ENCODE measurements at regions of chr2 and their contacts with region 1.

Region 1: DNA sequence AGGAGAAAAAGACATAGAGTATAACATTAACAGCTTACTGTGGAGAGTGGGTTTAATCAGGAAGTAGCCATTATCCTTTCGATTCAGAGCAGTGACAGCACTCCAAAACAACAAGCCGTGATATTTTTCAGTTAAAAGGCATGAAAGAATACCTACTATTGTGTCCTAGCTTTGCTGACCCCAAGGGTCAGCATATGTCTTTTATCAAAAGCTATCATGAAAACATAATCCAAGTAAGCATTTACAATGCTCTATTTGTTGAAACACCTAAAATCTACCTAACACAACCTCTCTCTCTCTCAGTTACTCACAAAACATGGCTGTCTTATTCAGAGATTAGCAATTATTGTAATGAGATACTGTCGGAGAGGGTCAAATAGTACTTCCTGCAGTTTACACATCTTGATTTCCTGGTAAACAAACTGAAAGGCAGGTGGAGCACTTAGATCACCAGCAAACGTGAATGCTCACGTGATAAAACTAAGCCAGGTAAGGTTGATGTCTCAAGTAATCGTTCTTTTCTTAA is 100.0 kb downstream of the BAZ2B start:
- DNase-seq: peak; percentile 76
- H3K4me3 Mint-ChIP-seq: peak overlapping the region; percentile 76
- H3K27ac Mint-ChIP-seq: peak overlapping the region; percentile 92
- H3K4me1 Mint-ChIP-seq: peaks cover 20% of the 10 kb centered on the region
- H3K27me3 Mint-ChIP-seq: no peaks in the 10 kb centered on the region
- CTCF ChIP-seq: no peak

Region 2: GRCh38 chr2:159044804-159045286 is 471.5 kb before region 1 on chr2:
- CTCF ChIA-PET with region 1: no interaction called
- POLR2A ChIA-PET with region 1: no interaction called
- intact Hi-C with region 1: no loop called
- DNase-seq: peak; percentile 72
- H3K4me3 Mint-ChIP-seq: peak overlapping the region; percentile 59
- H3K27ac Mint-ChIP-seq: peak overlapping the region; percentile 77
- H3K4me1 Mint-ChIP-seq: peaks cover 63% of the 10 kb centered on the region
- H3K27me3 Mint-ChIP-seq: no peaks in the 10 kb centered on the region
- CTCF ChIP-seq: no peak

Region 3: GRCh38 chr2:159249984-159250715 is 266.2 kb before region 1 on chr2:
- CTCF ChIA-PET with region 1: no interaction called
- POLR2A ChIA-PET with region 1: no interaction called
- intact Hi-C with region 1: loop called (anchors 10 kb)
- DNase-seq: peak; percentile 89
- H3K4me3 Mint-ChIP-seq: no peak overlapping the region
- H3K27ac Mint-ChIP-seq: peak overlapping the region; percentile 66
- H3K4me1 Mint-ChIP-seq: peaks cover 6% of the 10 kb centered on the region
- H3K27me3 Mint-ChIP-seq: no peaks in the 10 kb centered on the region
- CTCF ChIP-seq: no peak

Region 4: GRCh38 chr2:159600752-159601151 is 84.4 kb after region 1 on chr2:
- CTCF ChIA-PET with region 1: interaction called, 3 read pairs
- POLR2A ChIA-PET with region 1: interaction called, 16 read pairs
- intact Hi-C with region 1: no loop called
- DNase-seq: peak; percentile 86
- H3K4me3 Mint-ChIP-seq: peak overlapping the region; percentile 2
- H3K27ac Mint-ChIP-seq: peak overlapping the region; percentile 20
- H3K4me1 Mint-ChIP-seq: peaks cover 11% of the 10 kb centered on the region
- H3K27me3 Mint-ChIP-seq: no peaks in the 10 kb centered on the region
- CTCF ChIP-seq: no peak

Region 5: DNA sequence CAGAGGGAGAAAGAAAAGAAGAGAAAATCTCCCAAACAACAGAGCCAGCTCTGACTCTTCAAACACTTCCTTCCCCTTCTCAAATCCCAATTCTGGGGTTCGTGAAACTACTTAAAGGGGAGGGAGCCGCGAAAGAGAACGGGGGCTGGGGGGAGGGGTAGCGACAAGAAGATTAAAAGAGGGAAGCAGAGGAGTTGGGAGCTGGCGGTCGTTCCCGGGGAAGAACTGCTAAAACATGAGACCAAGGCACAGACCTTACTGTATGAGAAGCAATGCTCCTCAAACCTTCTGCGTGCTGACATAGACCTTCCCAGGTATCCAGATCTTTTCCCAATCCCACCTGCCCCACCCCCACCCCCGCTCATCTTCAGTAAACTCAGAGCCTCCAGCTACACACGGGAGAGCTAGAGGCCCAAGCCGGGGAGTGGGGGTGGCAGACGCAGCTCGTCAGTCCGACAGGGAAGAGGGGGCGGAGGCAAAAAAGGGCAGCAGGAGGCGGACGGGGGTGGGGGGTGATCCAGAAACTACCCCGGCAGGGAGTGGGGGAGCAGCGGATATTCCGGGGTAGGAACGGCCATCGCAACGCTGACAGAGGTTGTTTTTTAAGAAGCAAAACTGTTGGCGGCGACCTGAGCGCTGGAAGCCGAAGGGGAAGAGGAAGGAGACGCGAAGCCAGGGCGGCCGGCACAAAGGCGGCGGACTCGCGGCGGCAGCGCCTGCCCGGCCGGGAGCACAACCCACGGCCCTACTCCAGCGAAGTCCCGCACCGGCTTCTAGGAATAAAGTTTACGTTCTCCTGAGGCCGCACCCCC is 99.0 kb after region 1 on chr2:
- CTCF ChIA-PET with region 1: interaction called, 4 read pairs
- POLR2A ChIA-PET with region 1: interaction called, 209 read pairs
- intact Hi-C with region 1: loop called (anchors 5 kb)
- DNase-seq: peak; percentile 95
- H3K4me3 Mint-ChIP-seq: peak overlapping the region; percentile 99
- H3K27ac Mint-ChIP-seq: peak overlapping the region; percentile 98
- H3K4me1 Mint-ChIP-seq: peaks cover 15% of the 10 kb centered on the region
- H3K27me3 Mint-ChIP-seq: no peaks in the 10 kb centered on the region
- CTCF ChIP-seq: no peak

Region 6: GRCh38 chr2:159637971-159638501 is 121.7 kb after region 1 on chr2:
- CTCF ChIA-PET with region 1: no interaction called
- POLR2A ChIA-PET with region 1: no interaction called
- intact Hi-C with region 1: no loop called
- DNase-seq: peak; percentile 95
- H3K4me3 Mint-ChIP-seq: no peak overlapping the region
- H3K27ac Mint-ChIP-seq: peak overlapping the region; percentile 70
- H3K4me1 Mint-ChIP-seq: peaks cover 10% of the 10 kb centered on the region
- H3K27me3 Mint-ChIP-seq: no peaks in the 10 kb centered on the region
- CTCF ChIP-seq: no peak

Region 7: DNA sequence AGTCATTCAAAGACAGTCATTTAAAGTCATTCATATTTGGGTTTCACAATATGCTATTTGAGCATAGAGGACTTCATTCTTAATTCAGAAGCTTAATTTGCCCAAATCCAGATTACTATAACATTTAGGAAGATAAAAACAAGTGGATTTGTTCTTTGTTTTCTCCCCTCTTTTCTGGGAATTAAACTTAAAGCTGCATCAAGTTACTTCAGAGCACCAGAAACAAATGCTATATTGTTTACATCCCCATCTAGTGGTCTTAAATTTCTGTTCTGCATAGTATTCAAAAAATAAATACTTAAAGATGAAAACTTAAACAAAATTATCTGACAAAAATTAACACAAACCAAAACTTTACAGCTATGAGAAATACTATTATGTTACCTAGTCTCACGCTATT is 161.3 kb after region 1 on chr2:
- CTCF ChIA-PET with region 1: no interaction called
- POLR2A ChIA-PET with region 1: no interaction called
- intact Hi-C with region 1: loop called (anchors 1 kb)
- DNase-seq: peak; percentile 9
- H3K4me3 Mint-ChIP-seq: no peak overlapping the region
- H3K27ac Mint-ChIP-seq: no peak overlapping the region
- H3K4me1 Mint-ChIP-seq: peaks cover 2% of the 10 kb centered on the region
- H3K27me3 Mint-ChIP-seq: no peaks in the 10 kb centered on the region
- CTCF ChIP-seq: peak; percentile 32

Region 8: GRCh38 chr2:159788253-159788652 is 271.9 kb after region 1 on chr2:
- CTCF ChIA-PET with region 1: no interaction called
- POLR2A ChIA-PET with region 1: no interaction called
- intact Hi-C with region 1: no loop called
- DNase-seq: no peak
- H3K4me3 Mint-ChIP-seq: no peak overlapping the region
- H3K27ac Mint-ChIP-seq: no peak overlapping the region
- H3K4me1 Mint-ChIP-seq: no peaks in the 10 kb centered on the region
- H3K27me3 Mint-ChIP-seq: no peaks in the 10 kb centered on the region
- CTCF ChIP-seq: no peak

Measured in MCF 10A (cell line).